Upper lobe of right lung (tissue), 1 donor: ENCODE measurements at regions of chr10 and their contacts with region 1.

Region 1: GRCh38 chr10:46282842-46283574 is 3.8 kb upstream of the ANTXRL start:
- DNase-seq: peak; percentile 90
- ATAC-seq: peak; percentile 91
- H3K4me3 ChIP-seq: peak overlapping the region; percentile 50
- H3K27ac ChIP-seq: no peak overlapping the region
- H3K4me1 ChIP-seq: peaks cover 13% of the 10 kb centered on the region
- H3K27me3 ChIP-seq: no peaks in the 10 kb centered on the region
- CTCF ChIP-seq: no peak

Region 2: DNA sequence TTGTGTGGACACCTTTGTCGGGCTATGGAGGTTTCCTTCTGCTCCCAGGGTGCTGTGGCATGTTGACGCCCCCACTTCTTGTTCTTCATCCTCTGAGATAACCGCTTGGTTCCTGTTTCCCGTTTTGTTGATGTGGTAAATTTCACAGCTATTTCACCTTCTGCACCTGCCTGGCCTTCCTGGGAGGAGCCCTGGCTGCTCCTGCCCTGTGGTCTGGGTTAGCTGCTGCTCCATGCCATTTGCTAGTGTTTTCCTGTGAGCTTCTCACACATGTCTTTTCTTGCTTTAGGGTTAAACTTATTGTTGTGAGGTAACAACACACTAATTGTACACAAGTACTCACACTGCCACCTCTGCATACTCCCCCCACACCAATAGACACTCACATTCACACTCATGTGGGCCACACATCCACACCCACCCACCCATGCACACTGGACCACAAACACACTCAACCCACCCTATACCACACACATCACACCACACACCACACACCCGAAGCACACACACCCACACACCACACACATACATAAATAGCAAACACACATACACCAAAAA is 190.4 kb before region 1 on chr10:
- intact Hi-C with region 1: no loop called
- DNase-seq: no peak
- ATAC-seq: peak; percentile 13
- H3K4me3 ChIP-seq: no peak overlapping the region
- H3K27ac ChIP-seq: no peak overlapping the region
- H3K4me1 ChIP-seq: no peaks in the 10 kb centered on the region
- H3K27me3 ChIP-seq: no peaks in the 10 kb centered on the region
- CTCF ChIP-seq: no peak

Region 3: DNA sequence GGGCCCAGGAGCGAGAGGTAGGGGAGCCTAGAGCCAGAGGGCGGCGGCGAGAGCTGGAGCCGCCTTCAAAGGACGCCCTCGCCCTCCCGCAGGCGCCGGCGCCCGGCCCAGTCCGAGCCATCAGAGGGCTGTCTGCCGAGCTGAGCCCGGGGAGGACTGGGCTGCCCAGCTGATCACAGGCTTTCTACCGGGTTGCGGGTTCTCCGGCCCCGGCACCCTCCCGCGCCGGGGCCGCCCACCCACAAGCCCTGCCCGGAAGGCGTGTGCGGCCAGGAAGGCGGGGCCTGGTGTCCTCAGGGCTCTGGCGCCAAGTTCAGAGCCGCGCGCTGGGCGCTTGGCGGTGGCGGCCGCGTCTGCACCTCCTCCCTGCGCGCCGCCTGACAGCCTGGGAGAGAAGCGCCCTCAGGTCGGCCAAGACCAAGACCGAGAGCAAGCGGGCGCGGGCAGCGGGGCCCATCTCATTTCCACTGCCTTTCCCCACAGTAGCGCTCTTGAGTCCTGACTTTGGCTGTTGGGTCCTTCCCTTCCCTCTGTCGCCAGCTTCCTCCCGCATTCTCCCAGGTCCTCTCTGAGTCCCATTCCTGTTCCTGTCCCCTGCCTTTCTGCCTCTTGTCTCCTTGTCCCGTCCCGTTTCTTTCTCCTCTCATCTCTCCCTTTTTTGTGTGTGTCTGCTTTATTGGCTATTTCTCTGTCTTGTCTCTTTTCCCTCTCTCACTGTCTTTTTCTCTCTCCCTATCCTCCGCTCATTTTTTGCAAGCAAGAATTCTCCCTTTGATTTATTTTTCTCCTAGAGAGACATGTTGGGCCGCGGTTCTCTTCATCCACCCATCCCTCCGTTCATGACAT is 176.4 kb before region 1 on chr10:
- intact Hi-C with region 1: loop called (anchors 2 kb)
- DNase-seq: peak; percentile 84
- ATAC-seq: peak; percentile 98
- H3K4me3 ChIP-seq: peak overlapping the region; percentile 40
- H3K27ac ChIP-seq: no peak overlapping the region
- H3K4me1 ChIP-seq: peaks cover 6% of the 10 kb centered on the region
- H3K27me3 ChIP-seq: no peaks in the 10 kb centered on the region
- CTCF ChIP-seq: peak; percentile 18

Region 4: GRCh38 chr10:46247808-46248569 is 35.0 kb before region 1 on chr10:
- intact Hi-C with region 1: no loop called
- DNase-seq: peak; percentile 40
- ATAC-seq: no peak
- H3K4me3 ChIP-seq: no peak overlapping the region
- H3K27ac ChIP-seq: no peak overlapping the region
- H3K4me1 ChIP-seq: no peaks in the 10 kb centered on the region
- H3K27me3 ChIP-seq: no peaks in the 10 kb centered on the region
- CTCF ChIP-seq: no peak